ENCODE measurements at regions of chr14 and their contacts with region 1.

Region 1: GRCh38 chr14:52729925-52730667 is at the start of gene STYX:
- DNase-seq: peak; percentile 96
- H3K4me3 Mint-ChIP-seq: peak within 1 kb of the TSS; percentile 91
- H3K27ac Mint-ChIP-seq: peak within 1 kb of the TSS; percentile 76
- H3K4me1 Mint-ChIP-seq: peaks cover 37% of the 10 kb centered on the region
- H3K27me3 Mint-ChIP-seq: no peaks in the 10 kb centered on the region
- total RNA-seq, gene STYX: 18.7 and 21.3 TPM in 2 replicates

Region 2: GRCh38 chr14:51056421-51056820 is 1673.7 kb before region 1 on chr14:
- intact Hi-C with region 1: no loop called
- DNase-seq: no peak
- H3K4me3 Mint-ChIP-seq: no peak overlapping the region
- H3K27ac Mint-ChIP-seq: no peak overlapping the region
- H3K4me1 Mint-ChIP-seq: no peaks in the 10 kb centered on the region
- H3K27me3 Mint-ChIP-seq: no peaks in the 10 kb centered on the region

Region 3: DNA sequence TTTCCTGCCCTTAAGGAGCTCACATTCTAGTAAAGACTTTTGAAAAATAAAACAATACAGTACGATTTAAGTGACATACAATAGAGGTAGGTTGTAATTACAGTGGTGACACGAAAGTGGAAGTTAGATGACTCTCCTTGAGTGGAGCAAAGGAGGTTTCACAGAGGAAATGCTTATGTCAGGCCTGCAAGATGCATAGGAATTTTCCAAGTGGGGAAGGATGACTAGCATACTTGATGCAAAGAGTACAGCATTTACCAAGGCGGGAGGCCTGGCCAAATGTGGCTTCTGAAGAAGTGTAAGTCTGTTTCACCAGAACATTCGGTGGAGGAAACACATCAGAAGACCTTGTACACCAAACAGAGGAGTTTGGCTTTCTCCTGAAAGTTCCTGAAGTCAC is 90.0 kb before region 1 on chr14:
- intact Hi-C with region 1: no loop called
- DNase-seq: no peak
- H3K4me3 Mint-ChIP-seq: no peak overlapping the region
- H3K27ac Mint-ChIP-seq: peak overlapping the region; percentile 41
- H3K4me1 Mint-ChIP-seq: peaks cover 14% of the 10 kb centered on the region
- H3K27me3 Mint-ChIP-seq: peaks cover 6% of the 10 kb centered on the region

Region 4: DNA sequence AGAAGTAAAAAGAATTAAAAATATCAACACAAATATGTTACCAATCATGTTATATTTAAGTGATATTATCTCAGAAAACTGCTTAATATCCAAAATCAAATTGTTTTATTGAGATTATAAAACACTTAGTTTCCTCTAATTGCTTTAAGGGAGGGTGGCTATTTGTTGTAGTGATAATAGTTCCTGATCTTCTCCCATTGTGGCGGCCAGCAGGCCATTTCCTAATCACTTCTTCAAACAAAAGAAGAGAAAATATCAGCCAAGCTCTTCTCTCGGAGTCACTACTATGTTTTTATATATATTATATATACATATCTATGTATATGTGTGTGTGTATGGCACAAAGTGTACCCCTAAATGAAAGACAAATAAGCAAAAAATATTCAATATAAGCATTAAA is 66.2 kb before region 1 on chr14:
- intact Hi-C with region 1: no loop called
- DNase-seq: no peak
- H3K4me3 Mint-ChIP-seq: no peak overlapping the region
- H3K27ac Mint-ChIP-seq: no peak overlapping the region
- H3K4me1 Mint-ChIP-seq: peaks cover 10% of the 10 kb centered on the region
- H3K27me3 Mint-ChIP-seq: no peaks in the 10 kb centered on the region

Region 5: GRCh38 chr14:52695481-52696091 is 34.5 kb before region 1 on chr14 and contains the start of gene ERO1A:
- intact Hi-C with region 1: loop called (anchors 1 kb)
- DNase-seq: peak; percentile 67
- H3K4me3 Mint-ChIP-seq: peak within 1 kb of the TSS; percentile 100
- H3K27ac Mint-ChIP-seq: peak within 1 kb of the TSS; percentile 99
- H3K4me1 Mint-ChIP-seq: peaks cover 42% of the 10 kb centered on the region
- H3K27me3 Mint-ChIP-seq: peaks cover 1% of the 10 kb centered on the region
- total RNA-seq, gene ERO1A: 144 and 158 TPM in 2 replicates

Region 6: GRCh38 chr14:52741865-52742264 is 11.8 kb after region 1 on chr14:
- intact Hi-C with region 1: loop called (anchors 1 kb)
- DNase-seq: no peak
- H3K4me3 Mint-ChIP-seq: peak overlapping the region; percentile 75
- H3K27ac Mint-ChIP-seq: peak overlapping the region; percentile 89
- H3K4me1 Mint-ChIP-seq: peaks cover 36% of the 10 kb centered on the region
- H3K27me3 Mint-ChIP-seq: no peaks in the 10 kb centered on the region

Region 7: GRCh38 chr14:53055003-53055402 is 324.9 kb after region 1 on chr14:
- intact Hi-C with region 1: loop called (anchors 5 kb)
- DNase-seq: no peak
- H3K4me3 Mint-ChIP-seq: no peak overlapping the region
- H3K27ac Mint-ChIP-seq: no peak overlapping the region
- H3K4me1 Mint-ChIP-seq: peaks cover 13% of the 10 kb centered on the region
- H3K27me3 Mint-ChIP-seq: no peaks in the 10 kb centered on the region